MCF 10A (cell line): ENCODE measurements at regions of chr2 and their contacts with region 1.

Region 1: DNA sequence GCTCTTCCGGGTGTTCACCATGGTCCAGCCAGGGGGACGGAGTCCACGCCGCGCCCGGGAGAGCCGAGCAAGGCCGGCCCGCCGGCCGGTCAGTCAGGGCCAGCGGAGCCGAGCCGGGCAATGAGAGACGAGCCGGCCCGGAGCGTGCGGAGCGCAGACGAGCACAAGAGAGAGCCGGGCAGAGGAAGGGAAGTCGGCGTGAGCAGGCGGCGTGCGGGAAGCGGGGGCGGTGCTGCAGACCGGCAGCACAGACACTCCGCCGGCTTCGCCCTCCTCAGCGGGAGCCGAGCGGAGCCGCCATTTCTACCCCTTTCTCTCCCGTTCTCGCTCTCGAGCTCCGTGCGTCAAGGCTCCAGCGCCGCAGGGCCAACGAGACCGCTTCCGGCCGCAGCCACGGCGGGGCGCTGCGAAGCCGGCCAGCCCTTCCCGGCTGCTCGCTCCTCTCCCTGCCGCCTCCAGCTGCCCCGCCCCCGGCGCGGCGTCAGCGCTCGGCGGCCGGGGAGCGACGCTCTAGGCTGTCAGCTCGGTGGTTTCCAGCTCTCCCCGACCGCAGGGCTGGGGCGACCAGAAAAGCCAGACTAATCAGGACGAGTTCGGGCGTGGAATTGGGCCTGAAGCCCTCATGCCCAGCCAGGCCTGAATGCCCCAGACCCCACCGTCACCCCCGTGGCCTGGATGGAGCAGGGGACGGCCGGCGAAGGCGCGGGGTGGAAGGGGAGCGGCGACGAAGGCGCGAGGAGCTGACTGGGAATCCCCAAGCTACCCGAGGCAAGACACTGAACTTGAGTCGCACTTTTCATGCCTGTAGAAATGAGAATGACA is at the start of gene ATAD2B:
- DNase-seq: peak; percentile 92
- H3K4me3 Mint-ChIP-seq: peak within 1 kb of the TSS; percentile 98
- H3K27ac Mint-ChIP-seq: peak within 1 kb of the TSS; percentile 99
- H3K4me1 Mint-ChIP-seq: peaks cover 37% of the 10 kb centered on the region
- H3K27me3 Mint-ChIP-seq: no peaks in the 10 kb centered on the region
- CTCF ChIP-seq: peak; percentile 83
- total RNA-seq, gene ATAD2B: 19.6 and 19.7 TPM in 2 replicates

Region 2: DNA sequence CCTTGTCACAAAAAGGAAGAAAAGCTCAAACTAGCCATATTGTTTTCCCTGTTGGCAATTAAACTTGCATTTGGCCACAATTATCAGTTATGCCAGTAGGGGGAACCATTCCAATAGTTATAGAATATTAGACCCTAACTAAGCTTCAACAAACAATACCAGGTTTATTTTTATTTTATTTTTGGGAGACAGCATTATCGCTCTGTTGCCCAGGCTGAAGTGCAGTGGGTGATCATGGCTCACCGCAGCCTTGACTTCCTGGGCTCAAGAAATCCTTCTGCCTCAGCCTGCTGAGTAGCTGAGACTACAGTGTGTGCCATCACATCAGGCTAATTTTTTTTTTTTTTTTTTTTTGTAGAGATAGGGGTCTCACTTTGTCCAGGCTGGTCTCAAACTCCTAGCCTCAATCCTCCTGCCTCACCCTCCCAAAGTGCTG is 102.2 kb before region 1 on chr2:
- CTCF ChIA-PET with region 1: interaction called, 50 read pairs
- POLR2A ChIA-PET with region 1: interaction called, 69 read pairs
- intact Hi-C with region 1: loop called (anchors 1 kb)
- DNase-seq: peak; percentile 67
- H3K4me3 Mint-ChIP-seq: no peak overlapping the region
- H3K27ac Mint-ChIP-seq: no peak overlapping the region
- H3K4me1 Mint-ChIP-seq: peaks cover 27% of the 10 kb centered on the region
- H3K27me3 Mint-ChIP-seq: no peaks in the 10 kb centered on the region
- CTCF ChIP-seq: peak; percentile 61

Region 3: DNA sequence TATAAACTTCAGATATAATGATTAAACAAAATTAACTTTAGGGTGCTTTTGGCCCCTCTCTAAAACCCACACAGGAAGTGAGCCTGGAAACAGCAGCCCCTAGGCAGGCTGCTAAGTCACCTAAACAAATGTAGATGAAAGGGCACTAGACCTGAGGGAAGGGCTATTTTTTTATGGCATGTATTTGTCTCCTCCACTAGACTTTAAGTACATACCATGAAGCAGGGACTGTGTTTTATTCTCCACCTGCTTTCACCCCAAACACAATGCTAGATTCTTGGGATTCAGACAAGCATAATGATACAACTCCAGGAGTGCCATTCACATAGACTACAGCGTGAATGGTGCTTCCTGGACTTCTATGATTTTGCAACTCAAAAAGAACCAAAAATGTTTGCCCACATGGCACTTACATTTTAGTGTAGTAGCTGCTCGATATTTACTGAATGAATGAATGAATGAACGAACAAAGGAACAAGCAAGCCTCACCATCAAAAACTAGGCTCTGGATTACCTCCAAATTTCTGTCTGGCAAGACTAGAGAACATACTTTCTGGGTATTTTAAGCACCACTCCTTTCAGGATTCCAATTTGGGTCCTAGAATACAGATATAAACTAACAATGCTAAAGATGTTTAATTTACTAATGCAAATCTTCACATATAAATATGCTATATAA is 10.1 kb before region 1 on chr2:
- CTCF ChIA-PET with region 1: interaction called, 6 read pairs
- POLR2A ChIA-PET with region 1: interaction called, 29 read pairs
- intact Hi-C with region 1: no loop called
- DNase-seq: no peak
- H3K4me3 Mint-ChIP-seq: no peak overlapping the region
- H3K27ac Mint-ChIP-seq: no peak overlapping the region
- H3K4me1 Mint-ChIP-seq: peaks cover 18% of the 10 kb centered on the region
- H3K27me3 Mint-ChIP-seq: no peaks in the 10 kb centered on the region
- CTCF ChIP-seq: no peak

Region 4: GRCh38 chr2:24015562-24016346 is 88.8 kb after region 1 on chr2:
- CTCF ChIA-PET with region 1: interaction called, 4 read pairs
- POLR2A ChIA-PET with region 1: no interaction called
- intact Hi-C with region 1: loop called (anchors 2 kb)
- DNase-seq: peak; percentile 93
- H3K4me3 Mint-ChIP-seq: no peak overlapping the region
- H3K27ac Mint-ChIP-seq: peak overlapping the region; percentile 81
- H3K4me1 Mint-ChIP-seq: peaks cover 14% of the 10 kb centered on the region
- H3K27me3 Mint-ChIP-seq: no peaks in the 10 kb centered on the region
- CTCF ChIP-seq: no peak

Region 5: DNA sequence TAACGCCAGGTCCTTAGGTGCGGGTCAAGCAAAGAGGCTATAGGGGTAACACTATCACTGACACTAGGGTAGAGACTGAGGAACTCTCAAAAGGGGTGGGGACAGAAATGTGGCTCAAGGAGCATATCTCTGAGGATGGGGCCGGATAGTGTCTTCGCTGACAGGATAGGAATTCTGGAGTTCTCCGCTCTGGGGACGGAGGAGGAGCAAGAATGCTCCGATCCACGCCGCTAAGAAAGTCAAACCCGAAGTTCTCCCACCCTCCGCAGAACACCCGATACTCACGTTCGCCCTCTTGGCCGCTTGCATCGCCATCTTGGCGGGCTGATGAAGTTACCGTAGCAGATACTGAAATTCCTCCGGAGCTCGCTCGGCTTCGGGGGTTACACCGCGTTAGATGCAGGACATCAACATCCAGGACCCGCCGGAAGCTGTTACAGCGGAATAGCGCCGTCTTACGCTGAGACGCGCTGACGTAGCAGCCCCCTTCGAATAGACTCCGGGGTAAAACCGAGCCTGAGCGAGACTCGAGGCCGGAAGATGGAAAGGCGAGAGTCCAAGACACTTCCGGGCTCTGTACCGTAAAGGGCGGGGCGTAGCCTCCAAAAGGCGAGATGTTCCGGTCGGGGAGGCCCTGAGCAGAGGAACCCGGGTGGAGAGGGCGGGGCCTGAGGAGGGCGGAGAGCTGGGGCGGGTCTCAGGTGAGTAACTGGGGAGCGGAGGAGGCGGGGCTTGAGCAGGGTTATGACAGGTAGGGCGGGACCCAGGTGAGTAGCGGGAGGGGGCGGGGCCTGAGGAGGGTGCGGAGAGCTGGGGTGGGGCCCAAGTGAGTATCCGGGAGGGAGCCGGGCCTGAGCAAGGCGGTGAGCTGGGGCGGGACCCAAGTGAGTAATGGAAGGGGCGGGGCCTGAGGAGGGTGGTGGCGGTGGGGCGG is 149.2 kb after region 1 on chr2 and contains the start of gene SF3B6:
- CTCF ChIA-PET with region 1: interaction called, 8 read pairs
- POLR2A ChIA-PET with region 1: interaction called, 72 read pairs
- intact Hi-C with region 1: loop called (anchors 2 kb)
- DNase-seq: peak; percentile 100
- H3K4me3 Mint-ChIP-seq: peak within 1 kb of the TSS; percentile 97
- H3K27ac Mint-ChIP-seq: peak within 1 kb of the TSS; percentile 97
- H3K4me1 Mint-ChIP-seq: peaks cover 22% of the 10 kb centered on the region
- H3K27me3 Mint-ChIP-seq: no peaks in the 10 kb centered on the region
- CTCF ChIP-seq: no peak
- total RNA-seq, gene SF3B6: 141 and 180 TPM in 2 replicates

Region 6: DNA sequence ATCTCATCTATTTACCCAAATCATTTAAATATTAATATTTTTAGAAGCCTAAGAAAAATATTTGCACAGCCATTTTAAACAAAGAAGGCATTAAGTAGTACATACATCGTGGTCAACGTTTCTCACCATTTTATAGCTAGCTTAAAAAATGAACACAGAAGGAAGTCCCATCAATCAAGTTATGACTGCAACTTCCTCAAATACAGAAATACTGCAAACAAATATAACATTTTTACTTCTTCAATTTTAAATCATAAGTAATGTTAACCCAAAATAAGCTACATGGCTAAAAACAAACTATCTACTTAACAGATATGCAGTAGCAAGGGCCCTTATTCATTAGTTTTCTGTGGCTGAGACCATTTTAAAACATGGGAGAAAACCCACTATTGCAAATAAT is 402.7 kb after region 1 on chr2:
- CTCF ChIA-PET with region 1: no interaction called
- POLR2A ChIA-PET with region 1: no interaction called
- intact Hi-C with region 1: no loop called
- DNase-seq: no peak
- H3K4me3 Mint-ChIP-seq: no peak overlapping the region
- H3K27ac Mint-ChIP-seq: no peak overlapping the region
- H3K4me1 Mint-ChIP-seq: no peaks in the 10 kb centered on the region
- H3K27me3 Mint-ChIP-seq: no peaks in the 10 kb centered on the region
- CTCF ChIP-seq: no peak

Region 7: GRCh38 chr2:24382363-24383073 is 455.6 kb after region 1 on chr2:
- CTCF ChIA-PET with region 1: no interaction called
- POLR2A ChIA-PET with region 1: no interaction called
- intact Hi-C with region 1: loop called (anchors 10 kb)
- DNase-seq: peak; percentile 76
- H3K4me3 Mint-ChIP-seq: no peak overlapping the region
- H3K27ac Mint-ChIP-seq: no peak overlapping the region
- H3K4me1 Mint-ChIP-seq: peaks cover 10% of the 10 kb centered on the region
- H3K27me3 Mint-ChIP-seq: no peaks in the 10 kb centered on the region
- CTCF ChIP-seq: peak; percentile 68